CD8-positive, alpha-beta memory T cell (primary cell): ENCODE measurements at regions of chr19 and their contacts with region 1.

Region 1: DNA sequence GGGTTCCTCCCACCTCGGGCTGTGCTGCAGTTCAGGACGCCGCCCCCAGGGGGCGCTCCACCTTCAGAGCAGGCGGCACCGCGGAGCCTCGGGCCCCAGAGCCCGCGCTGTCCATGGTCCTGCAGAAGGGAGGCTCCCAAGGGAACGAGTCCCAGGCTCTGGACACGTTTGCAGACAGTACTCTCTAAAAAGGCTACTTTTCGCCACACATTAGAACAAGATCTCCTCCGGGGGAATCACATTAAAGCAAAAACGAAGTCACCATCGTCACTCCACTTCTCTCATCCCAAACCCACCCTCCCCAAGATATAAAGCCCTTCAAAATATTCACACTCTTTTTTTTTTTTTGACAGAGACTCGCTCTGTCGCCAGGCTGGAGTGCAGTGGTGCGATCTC is 4.6 kb upstream of the SIGLEC10 start:
- DNase-seq: peak; percentile 70 to 86 (median 80)
- H3K4me3 ChIP-seq: no peak overlapping the region
- H3K4me3 Mint-ChIP-seq: no peak overlapping the region
- H3K27ac ChIP-seq: no peak overlapping the region
- H3K27ac Mint-ChIP-seq: no peak overlapping the region
- H3K4me1 ChIP-seq: no peaks in the 10 kb centered on the region
- H3K4me1 Mint-ChIP-seq: peaks cover 3 to 6% (median 4%) of the 10 kb centered on the region in 3 donors
- H3K27me3 ChIP-seq: peaks cover 3% of the 10 kb centered on the region
- H3K27me3 Mint-ChIP-seq: peaks cover 27 to 35% of the 10 kb centered on the region in 2 donors

Region 2: DNA sequence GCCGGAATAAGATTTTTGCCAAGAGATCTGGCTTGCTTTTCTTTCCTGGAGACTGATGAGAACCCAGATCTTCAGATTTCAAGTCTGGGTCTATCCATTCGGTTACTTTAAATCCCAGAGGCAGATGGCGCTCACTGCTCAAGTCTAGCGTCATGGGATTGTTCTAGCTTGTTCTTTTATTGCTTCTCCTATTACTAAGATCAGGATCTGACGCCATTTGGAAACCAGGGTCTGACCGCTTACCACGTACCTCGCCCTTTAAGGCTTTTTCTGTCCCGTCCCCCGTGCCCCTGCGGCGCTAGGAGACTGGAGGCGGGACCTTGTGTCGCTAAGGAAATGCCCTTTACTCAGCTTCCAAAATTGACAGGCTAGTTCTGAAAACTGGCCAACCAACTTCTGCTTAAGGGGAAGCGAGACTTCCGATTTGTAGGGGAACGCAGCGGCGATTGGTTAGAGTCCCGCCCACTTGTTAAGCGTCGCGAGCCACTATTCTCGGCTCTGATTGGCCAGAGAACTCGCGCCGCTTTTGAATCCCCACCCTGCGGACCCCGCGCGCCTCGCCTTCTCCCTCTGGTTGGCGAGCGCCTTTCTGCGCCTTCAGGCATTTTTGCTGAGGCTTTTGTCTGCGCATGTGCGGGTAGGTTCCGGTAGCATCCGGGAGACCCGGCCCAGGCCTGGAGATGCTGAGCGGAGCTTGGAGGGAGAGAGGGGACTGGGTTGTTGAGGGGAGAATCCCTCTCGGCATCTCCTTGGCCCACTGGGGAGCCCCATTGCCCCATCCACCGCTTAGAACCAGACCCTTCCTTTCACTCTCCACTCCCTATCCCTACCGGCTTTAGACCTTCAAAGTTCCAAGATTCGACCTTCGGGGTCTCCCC is 27.9 kb before region 1 on chr19:
- CTCF ChIA-PET with region 1: interaction called, 10 read pairs
- POLR2A ChIA-PET with region 1: no interaction called
- DNase-seq: peak; percentile 85 to 91 (median 85)
- H3K4me3 ChIP-seq: peak overlapping the region; percentile 70
- H3K4me3 Mint-ChIP-seq: peak overlapping the region; percentile 80 to 90 (median 85)
- H3K27ac ChIP-seq: peak overlapping the region; percentile 78
- H3K27ac Mint-ChIP-seq: peak overlapping the region; percentile 86 to 98 (median 94)
- H3K4me1 ChIP-seq: peaks cover 17% of the 10 kb centered on the region
- H3K4me1 Mint-ChIP-seq: peaks cover 45 to 53% (median 48%) of the 10 kb centered on the region in 3 donors
- H3K27me3 ChIP-seq: no peaks in the 10 kb centered on the region
- H3K27me3 Mint-ChIP-seq: peaks cover 0 to 2% of the 10 kb centered on the region in 2 donors

Region 3: GRCh38 chr19:51402117-51402516 is 19.9 kb before region 1 on chr19:
- CTCF ChIA-PET with region 1: interaction called, 12 read pairs
- POLR2A ChIA-PET with region 1: no interaction called
- DNase-seq: no peak
- H3K4me3 ChIP-seq: no peak overlapping the region
- H3K4me3 Mint-ChIP-seq: no peak overlapping the region
- H3K27ac ChIP-seq: no peak overlapping the region
- H3K27ac Mint-ChIP-seq: no peak overlapping the region
- H3K4me1 ChIP-seq: no peaks in the 10 kb centered on the region
- H3K4me1 Mint-ChIP-seq: peaks cover 0 to 8% (median 7%) of the 10 kb centered on the region in 3 donors
- H3K27me3 ChIP-seq: no peaks in the 10 kb centered on the region
- H3K27me3 Mint-ChIP-seq: no peaks in the 10 kb centered on the region

Region 4: GRCh38 chr19:51407511-51408131 is 14.4 kb before region 1 on chr19:
- CTCF ChIA-PET with region 1: interaction called, 12 read pairs
- POLR2A ChIA-PET with region 1: no interaction called
- DNase-seq: peak in 4 of 5 donors; percentile 15 to 61 (median 30)
- H3K4me3 ChIP-seq: no peak overlapping the region
- H3K4me3 Mint-ChIP-seq: no peak overlapping the region
- H3K27ac ChIP-seq: no peak overlapping the region
- H3K27ac Mint-ChIP-seq: no peak overlapping the region
- H3K4me1 ChIP-seq: no peaks in the 10 kb centered on the region
- H3K4me1 Mint-ChIP-seq: peaks cover 4 to 7% (median 5%) of the 10 kb centered on the region in 3 donors
- H3K27me3 ChIP-seq: no peaks in the 10 kb centered on the region
- H3K27me3 Mint-ChIP-seq: no peaks in the 10 kb centered on the region

Region 5: GRCh38 chr19:51441410-51442390 is 19.6 kb after region 1 on chr19:
- CTCF ChIA-PET with region 1: interaction called, 48 read pairs
- POLR2A ChIA-PET with region 1: no interaction called
- DNase-seq: peak; percentile 64 to 92 (median 83)
- H3K4me3 ChIP-seq: peak overlapping the region; percentile 47
- H3K4me3 Mint-ChIP-seq: peak overlapping the region; percentile 65 to 90 (median 82)
- H3K27ac ChIP-seq: peak overlapping the region; percentile 77
- H3K27ac Mint-ChIP-seq: peak overlapping the region; percentile 80 to 98 (median 96)
- H3K4me1 ChIP-seq: peaks cover 21% of the 10 kb centered on the region
- H3K4me1 Mint-ChIP-seq: peaks cover 31 to 49% (median 32%) of the 10 kb centered on the region in 3 donors
- H3K27me3 ChIP-seq: peaks cover 3% of the 10 kb centered on the region
- H3K27me3 Mint-ChIP-seq: peaks cover 8 to 10% of the 10 kb centered on the region in 2 donors

Region 6: GRCh38 chr19:51473009-51473707 is 51.1 kb after region 1 on chr19:
- CTCF ChIA-PET with region 1: interaction called, 16 read pairs
- POLR2A ChIA-PET with region 1: no interaction called
- DNase-seq: peak; percentile 44 to 82 (median 67)
- H3K4me3 ChIP-seq: no peak overlapping the region
- H3K4me3 Mint-ChIP-seq: no peak overlapping the region
- H3K27ac ChIP-seq: no peak overlapping the region
- H3K27ac Mint-ChIP-seq: no peak overlapping the region
- H3K4me1 ChIP-seq: no peaks in the 10 kb centered on the region
- H3K4me1 Mint-ChIP-seq: no peaks in the 10 kb centered on the region
- H3K27me3 ChIP-seq: no peaks in the 10 kb centered on the region
- H3K27me3 Mint-ChIP-seq: peaks cover 11 to 41% of the 10 kb centered on the region in 2 donors

Region 7: GRCh38 chr19:51514866-51515481 is 92.9 kb after region 1 on chr19:
- CTCF ChIA-PET with region 1: interaction called, 26 read pairs
- POLR2A ChIA-PET with region 1: no interaction called
- DNase-seq: peak in 2 of 5 donors; percentile 21 to 33
- H3K4me3 ChIP-seq: no peak overlapping the region
- H3K4me3 Mint-ChIP-seq: no peak overlapping the region
- H3K27ac ChIP-seq: no peak overlapping the region
- H3K27ac Mint-ChIP-seq: no peak overlapping the region
- H3K4me1 ChIP-seq: no peaks in the 10 kb centered on the region
- H3K4me1 Mint-ChIP-seq: no peaks in the 10 kb centered on the region
- H3K27me3 ChIP-seq: no peaks in the 10 kb centered on the region
- H3K27me3 Mint-ChIP-seq: peaks cover 25 to 71% of the 10 kb centered on the region in 2 donors